ENCODE measurements at regions of chr1 and their contacts with region 1.

Region 1: GRCh38 chr1:50929376-50929958 is 30.6 kb downstream of the FAF1 start:
- DNase-seq: peak in 6 of 9 donors; percentile 1 to 41 (median 28)
- ATAC-seq: no peak
- H3K4me3 ChIP-seq: no peak overlapping the region
- H3K4me3 Mint-ChIP-seq: no peak overlapping the region
- H3K27ac ChIP-seq: no peak overlapping the region
- H3K27ac Mint-ChIP-seq: no peak overlapping the region
- H3K4me1 ChIP-seq: no peaks in the 10 kb centered on the region
- H3K4me1 Mint-ChIP-seq: peaks cover 13 to 43% (median 40%) of the 10 kb centered on the region in 7 donors
- H3K27me3 ChIP-seq: no peaks in the 10 kb centered on the region
- H3K27me3 Mint-ChIP-seq: no peaks in the 10 kb centered on the region

Region 2: GRCh38 chr1:50873458-50874187 is 55.8 kb before region 1 on chr1:
- CTCF ChIA-PET with region 1: no interaction called
- POLR2A ChIA-PET with region 1: no interaction called
- intact Hi-C with region 1: loop called in 1 of 2 experiments (anchors 10 kb)
- DNase-seq: peak in 8 of 9 donors; percentile 7 to 45 (median 23)
- ATAC-seq: peak; percentile 84
- H3K4me3 ChIP-seq: peak overlapping the region; percentile 25
- H3K4me3 Mint-ChIP-seq: peak overlapping the region in 1 of 10 donors; percentile 54
- H3K27ac ChIP-seq: no peak overlapping the region
- H3K27ac Mint-ChIP-seq: no peak overlapping the region
- H3K4me1 ChIP-seq: no peaks in the 10 kb centered on the region
- H3K4me1 Mint-ChIP-seq: peaks cover 8 to 28% (median 14%) of the 10 kb centered on the region in 7 donors
- H3K27me3 ChIP-seq: no peaks in the 10 kb centered on the region
- H3K27me3 Mint-ChIP-seq: no peaks in the 10 kb centered on the region

Region 3: GRCh38 chr1:50968158-50968820 is 38.8 kb after region 1 on chr1:
- CTCF ChIA-PET with region 1: interaction called, 7 read pairs
- POLR2A ChIA-PET with region 1: interaction called, 3 read pairs
- intact Hi-C with region 1: loop called (anchors 1 to 5 kb)
- DNase-seq: peak; percentile 67 to 86 (median 85)
- ATAC-seq: peak; percentile 89
- H3K4me3 ChIP-seq: peak overlapping the region; percentile 83
- H3K4me3 Mint-ChIP-seq: peak overlapping the region; percentile 92 to 99 (median 98)
- H3K27ac ChIP-seq: peak overlapping the region; percentile 96
- H3K27ac Mint-ChIP-seq: peak overlapping the region; percentile 71 to 100 (median 91)
- H3K4me1 ChIP-seq: peaks cover 6 to 15% of the 10 kb centered on the region in 2 donors
- H3K4me1 Mint-ChIP-seq: peaks cover 18 to 29% (median 26%) of the 10 kb centered on the region in 7 donors
- H3K27me3 ChIP-seq: no peaks in the 10 kb centered on the region
- H3K27me3 Mint-ChIP-seq: peaks cover 0 to 12% (median 2%) of the 10 kb centered on the region in 5 donors

Region 4: DNA sequence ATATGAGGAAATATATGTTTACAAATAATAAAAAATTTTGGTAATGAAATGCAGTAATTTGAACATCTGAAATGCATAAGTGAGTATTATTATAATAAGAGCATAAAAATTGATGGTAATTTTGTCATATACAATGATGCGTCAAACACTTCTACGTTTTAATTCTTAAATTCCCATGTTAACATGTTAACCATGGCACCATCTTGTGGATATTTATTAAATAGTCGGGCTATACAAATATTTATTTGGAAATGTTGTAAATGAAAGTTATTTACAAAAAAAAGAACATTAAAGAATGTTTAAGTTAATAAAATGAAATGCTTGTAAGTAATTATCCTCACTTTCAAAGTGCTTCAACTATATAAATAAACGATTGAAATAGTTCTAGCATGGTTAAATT is 115.4 kb after region 1 on chr1:
- CTCF ChIA-PET with region 1: interaction called, 7 read pairs
- POLR2A ChIA-PET with region 1: no interaction called
- intact Hi-C with region 1: loop called (anchors 1 to 10 kb)
- DNase-seq: peak in 3 of 9 donors; percentile 1 to 8 (median 7)
- ATAC-seq: no peak
- H3K4me3 ChIP-seq: no peak overlapping the region
- H3K4me3 Mint-ChIP-seq: no peak overlapping the region
- H3K27ac ChIP-seq: no peak overlapping the region
- H3K27ac Mint-ChIP-seq: no peak overlapping the region
- H3K4me1 ChIP-seq: no peaks in the 10 kb centered on the region
- H3K4me1 Mint-ChIP-seq: no peaks in the 10 kb centered on the region
- H3K27me3 ChIP-seq: no peaks in the 10 kb centered on the region
- H3K27me3 Mint-ChIP-seq: peaks cover 0 to 18% (median 10%) of the 10 kb centered on the region in 5 donors

Region 5: GRCh38 chr1:51192213-51192843 is 262.9 kb after region 1 on chr1:
- CTCF ChIA-PET with region 1: interaction called, 14 read pairs
- POLR2A ChIA-PET with region 1: interaction called, 4 read pairs
- intact Hi-C with region 1: loop called (anchors 1 kb)
- DNase-seq: peak in 8 of 9 donors; percentile 9 to 48 (median 32)
- ATAC-seq: peak; percentile 76
- H3K4me3 ChIP-seq: no peak overlapping the region
- H3K4me3 Mint-ChIP-seq: no peak overlapping the region
- H3K27ac ChIP-seq: no peak overlapping the region
- H3K27ac Mint-ChIP-seq: no peak overlapping the region
- H3K4me1 ChIP-seq: no peaks in the 10 kb centered on the region
- H3K4me1 Mint-ChIP-seq: no peaks in the 10 kb centered on the region
- H3K27me3 ChIP-seq: no peaks in the 10 kb centered on the region
- H3K27me3 Mint-ChIP-seq: peaks cover 0 to 17% (median 3%) of the 10 kb centered on the region in 5 donors

Measured in naive thymus-derived CD4-positive, alpha-beta T cell (primary cell).